ENCODE measurements at regions of chr14 and their contacts with region 1.

Region 1: GRCh38 chr14:102774391-102775153 is 2.7 kb upstream of the TRAF3 start:
- DNase-seq: peak; percentile 39 to 85 (median 76)
- ATAC-seq: peak; percentile 52
- H3K4me3 ChIP-seq: no peak overlapping the region
- H3K4me3 Mint-ChIP-seq: peak overlapping the region; percentile 48 to 79 (median 63)
- H3K27ac ChIP-seq: peak overlapping the region; percentile 79
- H3K27ac Mint-ChIP-seq: peak overlapping the region; percentile 83 to 97 (median 92)
- H3K4me1 ChIP-seq: peaks cover 13 to 30% of the 10 kb centered on the region in 2 donors
- H3K4me1 Mint-ChIP-seq: peaks cover 14 to 44% (median 35%) of the 10 kb centered on the region in 7 donors
- H3K27me3 ChIP-seq: no peaks in the 10 kb centered on the region
- H3K27me3 Mint-ChIP-seq: no peaks in the 10 kb centered on the region

Region 2: GRCh38 chr14:102316743-102317563 is 457.6 kb before region 1 on chr14:
- CTCF ChIA-PET with region 1: no interaction called
- POLR2A ChIA-PET with region 1: interaction called, 3 read pairs
- intact Hi-C with region 1: loop called (anchors 5 kb)
- DNase-seq: peak; percentile 90 to 99 (median 95)
- ATAC-seq: peak; percentile 77
- H3K4me3 ChIP-seq: peak overlapping the region; percentile 84
- H3K4me3 Mint-ChIP-seq: peak overlapping the region; percentile 91 to 99 (median 97)
- H3K27ac ChIP-seq: peak overlapping the region; percentile 62
- H3K27ac Mint-ChIP-seq: peak overlapping the region; percentile 95 to 99 (median 98)
- H3K4me1 ChIP-seq: peaks cover 37 to 43% of the 10 kb centered on the region in 2 donors
- H3K4me1 Mint-ChIP-seq: peaks cover 34 to 76% (median 64%) of the 10 kb centered on the region in 7 donors
- H3K27me3 ChIP-seq: no peaks in the 10 kb centered on the region
- H3K27me3 Mint-ChIP-seq: peaks cover 0 to 6% (median 0%) of the 10 kb centered on the region in 5 donors

Region 3: GRCh38 chr14:102694530-102695166 is 79.9 kb before region 1 on chr14:
- CTCF ChIA-PET with region 1: interaction called, 3 read pairs
- POLR2A ChIA-PET with region 1: no interaction called
- intact Hi-C with region 1: loop called (anchors 1 to 5 kb)
- DNase-seq: peak in 8 of 9 donors; percentile 45 to 71 (median 64)
- ATAC-seq: peak; percentile 87
- H3K4me3 ChIP-seq: no peak overlapping the region
- H3K4me3 Mint-ChIP-seq: no peak overlapping the region
- H3K27ac ChIP-seq: no peak overlapping the region
- H3K27ac Mint-ChIP-seq: peak overlapping the region in 3 of 9 donors; percentile 15 to 60 (median 43)
- H3K4me1 ChIP-seq: peaks cover 0 to 3% of the 10 kb centered on the region in 2 donors
- H3K4me1 Mint-ChIP-seq: peaks cover 25 to 50% (median 31%) of the 10 kb centered on the region in 7 donors
- H3K27me3 ChIP-seq: no peaks in the 10 kb centered on the region
- H3K27me3 Mint-ChIP-seq: no peaks in the 10 kb centered on the region

Region 4: DNA sequence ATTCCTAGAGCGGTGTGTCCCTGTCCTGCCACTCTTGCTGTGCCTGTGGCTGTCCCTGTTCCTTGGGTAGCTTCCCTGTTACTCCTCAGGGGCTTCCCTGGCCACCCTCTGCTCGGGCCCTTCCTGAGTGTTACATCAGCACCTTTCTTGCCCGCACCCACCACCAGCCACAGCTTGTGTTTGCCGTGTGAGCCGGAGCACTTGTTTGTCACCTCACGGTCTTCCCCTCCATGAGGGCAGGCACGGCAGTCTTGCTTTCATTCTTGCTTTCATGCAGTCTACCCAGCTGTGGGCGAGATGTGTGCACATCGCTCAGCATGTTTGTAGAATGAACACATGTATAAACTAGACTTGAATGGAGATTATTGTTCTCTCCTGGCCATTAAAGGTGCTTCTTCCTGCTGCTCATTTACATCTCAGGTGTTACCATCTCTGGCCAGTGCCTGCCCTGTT is 44.6 kb after region 1 on chr14:
- CTCF ChIA-PET with region 1: no interaction called
- POLR2A ChIA-PET with region 1: no interaction called
- intact Hi-C with region 1: loop called (anchors 2 to 5 kb)
- DNase-seq: peak in 1 of 9 donors; percentile 71
- ATAC-seq: peak; percentile 78
- H3K4me3 ChIP-seq: peak overlapping the region; percentile 34
- H3K4me3 Mint-ChIP-seq: peak overlapping the region in 6 of 10 donors; percentile 2 to 81 (median 45)
- H3K27ac ChIP-seq: no peak overlapping the region
- H3K27ac Mint-ChIP-seq: peak overlapping the region; percentile 5 to 91 (median 33)
- H3K4me1 ChIP-seq: peaks cover 16 to 27% of the 10 kb centered on the region in 2 donors
- H3K4me1 Mint-ChIP-seq: peaks cover 56 to 90% (median 76%) of the 10 kb centered on the region in 7 donors
- H3K27me3 ChIP-seq: no peaks in the 10 kb centered on the region
- H3K27me3 Mint-ChIP-seq: no peaks in the 10 kb centered on the region

Region 5: GRCh38 chr14:102917469-102918211 is 143.1 kb after region 1 on chr14:
- CTCF ChIA-PET with region 1: no interaction called
- POLR2A ChIA-PET with region 1: no interaction called
- intact Hi-C with region 1: loop called (anchors 1 kb)
- DNase-seq: peak in 7 of 9 donors; percentile 36 to 58 (median 45)
- ATAC-seq: peak; percentile 58
- H3K4me3 ChIP-seq: no peak overlapping the region
- H3K4me3 Mint-ChIP-seq: no peak overlapping the region
- H3K27ac ChIP-seq: no peak overlapping the region
- H3K27ac Mint-ChIP-seq: peak overlapping the region in 3 of 9 donors; percentile 39 to 75 (median 71)
- H3K4me1 ChIP-seq: no peaks in the 10 kb centered on the region
- H3K4me1 Mint-ChIP-seq: peaks cover 0 to 2% (median 0%) of the 10 kb centered on the region in 7 donors
- H3K27me3 ChIP-seq: no peaks in the 10 kb centered on the region
- H3K27me3 Mint-ChIP-seq: no peaks in the 10 kb centered on the region

Region 6: DNA sequence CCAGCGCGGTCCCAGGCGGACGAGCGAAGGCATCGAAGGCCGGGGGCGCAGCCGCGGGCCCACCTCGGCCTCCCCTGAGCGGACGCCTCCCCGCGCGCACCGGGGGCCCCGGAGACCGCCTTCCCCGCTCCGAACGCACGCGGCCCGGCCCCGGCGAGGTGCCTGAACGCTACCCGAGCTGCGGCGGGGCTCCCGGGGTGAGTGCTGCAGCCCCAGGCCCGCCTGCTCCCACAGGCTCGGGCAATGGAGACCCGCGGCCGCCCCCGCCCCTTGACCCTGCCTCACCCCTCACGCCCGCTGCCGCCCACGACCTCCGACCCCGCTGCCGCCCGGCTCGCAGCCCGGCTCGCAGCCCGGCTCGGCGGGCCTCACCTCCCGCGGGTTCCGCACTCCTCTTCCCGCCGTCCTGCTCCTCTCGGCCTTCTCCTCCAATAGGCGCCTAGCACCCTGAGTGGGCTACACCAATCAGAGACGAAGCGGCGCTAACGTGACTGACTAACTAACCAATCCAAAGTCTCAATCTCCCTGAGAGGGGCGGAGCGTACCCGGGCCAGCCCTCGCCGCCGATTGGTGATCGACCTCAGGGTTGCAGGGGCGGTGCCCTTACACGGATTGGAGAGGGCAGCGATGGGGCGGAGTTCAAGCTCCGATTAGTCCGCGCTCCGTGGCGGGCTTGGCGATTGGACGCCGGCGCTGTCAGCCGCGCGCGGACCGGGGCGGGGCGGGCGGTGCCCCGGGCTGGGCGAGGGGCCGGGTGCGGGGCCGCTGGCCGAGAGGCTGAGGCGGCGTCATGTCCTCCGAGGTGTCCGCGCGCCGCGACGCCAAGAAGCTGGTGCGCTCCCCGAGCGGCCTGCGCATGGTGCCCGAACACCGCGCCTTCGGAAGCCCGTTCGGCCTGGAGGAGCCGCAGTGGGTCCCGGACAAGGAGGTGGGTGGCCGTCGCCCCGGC is 940.8 kb after region 1 on chr14 and contains the starts of genes XRCC3 and ZFYVE21:
- CTCF ChIA-PET with region 1: no interaction called
- POLR2A ChIA-PET with region 1: no interaction called
- intact Hi-C with region 1: loop called in 1 of 2 experiments (anchors 10 kb)
- DNase-seq: peak; percentile 96 to 100 (median 100)
- ATAC-seq: peak; percentile 97
- H3K4me3 ChIP-seq: peak within 1 kb of the TSS; percentile 56
- H3K4me3 Mint-ChIP-seq: peak within 1 kb of the TSS; percentile 89 to 98 (median 94)
- H3K27ac ChIP-seq: peak within 1 kb of the TSS; percentile 73
- H3K27ac Mint-ChIP-seq: peak within 1 kb of the TSS; percentile 40 to 95 (median 91)
- H3K4me1 ChIP-seq: peaks cover 8 to 13% of the 10 kb centered on the region in 2 donors
- H3K4me1 Mint-ChIP-seq: peaks cover 38 to 69% (median 52%) of the 10 kb centered on the region in 7 donors
- H3K27me3 ChIP-seq: no peaks in the 10 kb centered on the region
- H3K27me3 Mint-ChIP-seq: peaks cover 0 to 2% (median 0%) of the 10 kb centered on the region in 5 donors
- total RNA-seq, gene XRCC3: 9.3 to 38.9 (median 15.9) TPM
- total RNA-seq, gene ZFYVE21: 5.8 to 19.0 (median 16.8) TPM